ENCODE measurements at regions of chr1 and their contacts with region 1.

Region 1: GRCh38 chr1:225777583-225778336 is at the start of gene SRP9:
- DNase-seq: peak; percentile 99
- H3K4me3 ChIP-seq: peak within 1 kb of the TSS; percentile 86 to 89
- H3K27ac ChIP-seq: peak within 1 kb of the TSS; percentile 92 to 97
- H3K4me1 ChIP-seq: peaks cover 0 to 57% (median 38%) of the 10 kb centered on the region in 4 donors
- H3K27me3 ChIP-seq: no peaks in the 10 kb centered on the region
- CTCF ChIP-seq: peak; percentile 95

Region 2: DNA sequence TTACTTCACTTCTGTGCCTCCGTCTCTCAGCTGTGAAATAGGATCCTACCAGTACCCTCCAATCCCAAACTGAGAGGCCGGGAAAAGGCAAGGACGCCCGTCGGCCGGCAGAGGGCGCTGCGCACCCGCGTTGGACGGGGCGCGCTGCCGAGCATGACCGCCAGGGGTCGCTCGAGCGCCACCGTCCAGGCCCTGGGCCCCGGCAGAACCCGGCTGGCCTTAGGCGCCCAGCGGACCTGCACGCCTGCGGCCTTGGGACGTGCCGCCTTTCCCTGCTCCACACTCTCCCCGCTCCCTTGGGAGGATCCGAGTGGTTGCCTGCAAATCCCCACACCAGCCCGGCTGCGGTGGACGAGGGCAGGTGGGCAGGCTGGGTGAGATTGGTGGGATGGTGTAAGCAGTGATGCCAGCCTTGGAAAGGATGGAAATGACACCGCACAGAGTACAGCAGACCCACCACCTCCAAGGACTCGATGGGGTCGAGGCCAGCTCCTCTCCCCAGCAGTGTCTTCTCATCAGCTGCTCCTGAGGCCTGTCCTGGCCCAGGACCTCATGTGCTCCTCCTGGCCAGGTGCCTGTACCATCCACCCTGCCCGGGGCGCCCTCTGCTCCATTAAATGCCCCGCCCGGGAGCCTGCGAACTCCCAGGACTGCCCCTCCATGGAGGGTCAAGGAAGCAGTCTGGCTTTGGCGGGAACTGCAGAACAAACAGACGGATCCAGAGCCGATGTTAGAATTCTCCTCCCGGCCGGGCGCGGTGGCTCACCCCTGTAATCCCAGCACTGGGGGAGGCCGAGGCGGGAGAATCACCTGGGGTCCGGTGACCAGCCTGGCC is 302.6 kb before region 1 on chr1:
- intact Hi-C with region 1: loop called (anchors 2 kb)
- DNase-seq: peak; percentile 48 to 85
- H3K4me3 ChIP-seq: no peak overlapping the region
- H3K27ac ChIP-seq: no peak overlapping the region
- H3K4me1 ChIP-seq: peaks cover 0 to 11% (median 4%) of the 10 kb centered on the region in 4 donors
- H3K27me3 ChIP-seq: no peaks in the 10 kb centered on the region
- CTCF ChIP-seq: peak; percentile 100

Region 3: DNA sequence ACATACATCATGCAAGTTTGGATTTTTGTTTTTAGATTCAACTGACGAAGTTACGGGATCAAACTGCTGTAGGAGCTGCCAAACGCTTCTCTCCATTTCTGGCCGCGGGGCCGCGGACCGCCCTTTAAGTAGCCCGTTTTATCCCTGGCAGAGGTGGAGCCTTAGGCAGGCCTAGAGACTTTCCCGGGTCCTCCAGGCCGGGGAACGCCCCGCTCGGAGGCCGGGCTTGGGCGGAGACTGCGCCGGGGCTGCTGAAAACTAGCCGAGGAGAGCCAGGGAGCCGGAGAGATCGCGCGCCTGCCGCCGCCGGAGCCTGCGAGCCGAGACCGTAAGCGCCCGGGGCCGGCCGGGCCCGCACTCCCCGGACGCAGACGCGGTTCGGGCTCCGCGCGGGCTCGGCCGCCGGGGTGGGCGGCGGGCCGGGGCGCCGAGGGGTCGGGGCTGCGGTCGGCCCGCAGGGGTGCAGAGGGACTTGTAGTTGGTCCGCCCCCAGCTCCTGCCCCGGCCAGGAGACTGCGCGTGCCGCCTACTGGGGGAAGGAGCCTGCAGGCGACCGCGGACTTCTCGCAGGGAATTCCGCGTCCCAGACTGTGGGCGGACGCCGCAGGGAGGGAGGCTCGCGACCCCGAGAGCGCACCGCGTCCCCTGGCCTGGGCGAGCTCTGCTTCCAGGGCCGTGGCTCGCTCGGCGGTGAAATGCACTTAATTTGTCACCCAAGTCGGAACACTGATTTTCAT is 32.2 kb after region 1 on chr1 and contains the start of gene EPHX1:
- intact Hi-C with region 1: loop called (anchors 2 kb)
- DNase-seq: peak; percentile 92 to 96
- H3K4me3 ChIP-seq: peak within 1 kb of the TSS; percentile 58 to 82
- H3K27ac ChIP-seq: peak within 1 kb of the TSS; percentile 68 to 74
- H3K4me1 ChIP-seq: peaks cover 0 to 52% (median 41%) of the 10 kb centered on the region in 4 donors
- H3K27me3 ChIP-seq: no peaks in the 10 kb centered on the region
- CTCF ChIP-seq: peak; percentile 38 to 51

Region 4: DNA sequence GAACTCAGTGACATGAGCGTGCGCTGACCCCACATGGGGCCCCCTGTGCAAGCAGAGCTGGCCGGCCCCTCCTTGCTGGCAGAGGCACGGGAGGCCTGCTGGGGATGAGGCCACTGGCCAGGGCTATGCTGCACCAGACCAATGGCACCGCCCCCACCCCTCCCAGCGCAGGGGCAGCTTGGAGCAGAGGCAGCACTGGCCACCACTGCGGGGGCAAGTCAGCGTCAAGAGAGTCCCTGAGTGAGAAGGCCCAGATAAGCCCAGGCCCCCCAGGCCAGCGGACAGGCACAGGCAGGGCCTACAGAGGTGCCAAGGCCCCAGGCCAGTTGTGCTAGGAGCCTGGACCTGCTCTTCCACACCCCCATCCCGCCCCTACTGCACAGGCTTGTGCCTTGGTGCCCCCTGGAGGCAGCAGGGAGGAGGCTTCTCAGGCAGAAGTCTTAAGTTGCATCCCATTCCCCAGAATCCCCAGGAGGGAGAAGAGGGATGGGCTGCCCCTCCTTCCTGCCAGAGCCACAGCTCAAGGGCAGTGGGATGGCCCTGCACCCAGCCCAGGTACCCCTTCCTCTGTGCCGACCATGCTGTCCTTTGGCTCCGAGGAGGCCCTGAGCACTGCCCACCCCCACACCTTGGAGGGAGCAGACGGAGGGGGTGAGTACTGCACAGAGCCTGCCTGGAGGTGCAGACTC is 68.0 kb after region 1 on chr1:
- intact Hi-C with region 1: loop called (anchors 5 kb)
- DNase-seq: peak; percentile 82 to 92
- H3K4me3 ChIP-seq: no peak overlapping the region
- H3K27ac ChIP-seq: peak overlapping the region; percentile 11 to 54
- H3K4me1 ChIP-seq: peaks cover 0 to 9% (median 6%) of the 10 kb centered on the region in 4 donors
- H3K27me3 ChIP-seq: no peaks in the 10 kb centered on the region
- CTCF ChIP-seq: peak; percentile 83 to 85

Region 5: GRCh38 chr1:225911191-225912130 is 133.7 kb after region 1 on chr1:
- intact Hi-C with region 1: loop called (anchors 5 kb)
- DNase-seq: peak; percentile 50 to 77
- H3K4me3 ChIP-seq: peak overlapping the region in 1 of 2 donors; percentile 12
- H3K27ac ChIP-seq: no peak overlapping the region
- H3K4me1 ChIP-seq: peaks cover 0 to 9% (median 7%) of the 10 kb centered on the region in 4 donors
- H3K27me3 ChIP-seq: no peaks in the 10 kb centered on the region
- CTCF ChIP-seq: peak; percentile 88 to 95

Measured in tibial artery (tissue), 4 donors.